ENCODE measurements at regions of chr9 and their contacts with region 1.

Region 1: DNA sequence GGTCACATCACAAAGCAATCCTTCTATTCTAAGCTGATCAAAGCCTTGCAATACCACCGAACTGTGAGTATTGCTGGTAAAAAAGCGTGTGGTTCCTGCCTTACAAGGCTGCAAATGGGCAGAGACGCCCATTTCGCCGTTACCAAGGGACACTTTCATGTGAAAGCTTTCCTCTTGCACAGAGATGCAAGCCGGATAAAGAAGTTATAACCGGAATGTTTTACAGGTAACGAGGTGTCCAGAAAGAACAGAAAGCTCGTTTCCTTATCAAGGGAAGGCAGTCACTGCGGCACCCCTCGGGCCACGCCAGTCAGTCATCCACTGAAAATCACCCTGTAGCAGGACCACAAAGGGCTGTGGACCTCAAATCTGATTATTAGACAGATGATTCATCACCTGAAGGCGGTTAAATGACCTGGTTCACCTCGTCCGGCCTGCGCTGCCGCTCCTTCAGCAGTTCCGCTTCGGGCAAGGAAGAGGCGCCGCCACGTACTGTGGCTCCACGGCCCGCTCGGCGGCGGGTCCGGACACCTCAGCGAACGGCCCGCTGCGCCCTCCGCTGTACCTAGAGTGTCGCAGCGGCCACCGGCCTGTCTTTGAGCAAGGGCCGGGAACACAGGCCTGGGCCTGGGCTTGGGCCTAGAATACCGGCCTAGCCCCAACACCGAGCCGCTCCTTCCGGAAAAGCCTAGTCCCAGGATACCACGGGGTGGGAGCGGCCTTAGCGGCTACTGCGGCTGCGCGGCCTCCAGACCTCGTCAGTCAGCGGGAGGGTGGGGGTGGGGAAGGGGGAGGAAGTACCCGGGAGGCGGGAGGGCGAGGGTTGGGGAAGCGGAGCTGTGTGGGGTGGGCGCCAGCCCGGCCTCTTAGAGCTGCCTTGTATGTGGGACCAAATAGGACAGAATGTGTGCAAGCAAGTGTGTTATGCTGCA is at the start of gene KLHL9:
- DNase-seq: peak; percentile 96
- ATAC-seq: peak; percentile 99
- H3K4me3 ChIP-seq: peak within 1 kb of the TSS; percentile 86
- H3K27ac ChIP-seq: peak within 1 kb of the TSS; percentile 99
- H3K4me1 ChIP-seq: peaks cover 51% of the 10 kb centered on the region
- H3K27me3 ChIP-seq: no peaks in the 10 kb centered on the region
- CTCF ChIP-seq: no peak
- total RNA-seq, gene KLHL9: 22.7 TPM

Region 2: DNA sequence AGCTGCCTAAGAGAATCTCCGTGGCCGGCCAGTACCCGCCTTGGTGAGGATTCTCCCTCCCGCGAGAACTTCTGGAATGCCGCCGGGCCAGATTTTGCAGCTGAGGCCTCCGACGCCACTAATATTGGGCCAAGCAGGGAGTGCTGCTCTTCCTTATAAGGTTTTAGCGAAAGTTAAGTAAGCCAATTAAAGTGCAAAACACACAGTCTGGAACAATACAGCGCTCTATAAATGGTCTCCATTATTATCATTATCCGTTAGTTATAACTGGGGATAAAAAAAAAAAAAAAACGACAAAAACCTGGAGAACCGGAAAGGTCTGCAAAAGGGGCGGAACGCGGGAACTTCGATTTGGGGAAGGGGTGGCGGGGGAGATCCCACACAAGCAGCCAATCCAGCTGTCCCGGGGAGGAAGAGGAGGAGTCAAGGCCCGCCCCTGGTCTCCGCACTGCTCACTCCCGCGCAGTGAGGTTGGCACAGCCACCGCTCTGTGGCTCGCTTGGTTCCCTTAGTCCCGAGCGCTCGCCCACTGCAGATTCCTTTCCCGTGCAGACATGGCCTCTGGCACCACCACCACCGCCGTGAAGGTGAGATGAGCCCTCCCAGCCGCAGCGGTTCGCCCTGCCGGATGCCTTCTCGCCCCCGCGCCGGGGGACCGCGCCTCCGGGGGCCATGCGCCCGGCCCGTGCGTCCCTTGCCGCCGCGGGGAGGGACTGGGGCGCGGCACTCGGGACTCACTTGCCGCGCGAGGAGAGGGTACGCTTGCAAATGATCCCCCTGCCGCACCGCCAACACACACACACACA is 467.4 kb after region 1 on chr9 and contains the start of gene MTAP:
- intact Hi-C with region 1: loop called (anchors 10 kb)
- DNase-seq: peak; percentile 93
- ATAC-seq: peak; percentile 97 to 98
- H3K4me3 ChIP-seq: peak within 1 kb of the TSS; percentile 92
- H3K27ac ChIP-seq: peak within 1 kb of the TSS; percentile 87
- H3K4me1 ChIP-seq: peaks cover 26% of the 10 kb centered on the region
- H3K27me3 ChIP-seq: no peaks in the 10 kb centered on the region
- CTCF ChIP-seq: no peak
- total RNA-seq, gene MTAP: 35.2 TPM

Measured in lower lobe of right lung (tissue), 2 donors.